CD4-positive, alpha-beta T cell (primary cell): ENCODE measurements at regions of chr18 and their contacts with region 1.

Region 1: DNA sequence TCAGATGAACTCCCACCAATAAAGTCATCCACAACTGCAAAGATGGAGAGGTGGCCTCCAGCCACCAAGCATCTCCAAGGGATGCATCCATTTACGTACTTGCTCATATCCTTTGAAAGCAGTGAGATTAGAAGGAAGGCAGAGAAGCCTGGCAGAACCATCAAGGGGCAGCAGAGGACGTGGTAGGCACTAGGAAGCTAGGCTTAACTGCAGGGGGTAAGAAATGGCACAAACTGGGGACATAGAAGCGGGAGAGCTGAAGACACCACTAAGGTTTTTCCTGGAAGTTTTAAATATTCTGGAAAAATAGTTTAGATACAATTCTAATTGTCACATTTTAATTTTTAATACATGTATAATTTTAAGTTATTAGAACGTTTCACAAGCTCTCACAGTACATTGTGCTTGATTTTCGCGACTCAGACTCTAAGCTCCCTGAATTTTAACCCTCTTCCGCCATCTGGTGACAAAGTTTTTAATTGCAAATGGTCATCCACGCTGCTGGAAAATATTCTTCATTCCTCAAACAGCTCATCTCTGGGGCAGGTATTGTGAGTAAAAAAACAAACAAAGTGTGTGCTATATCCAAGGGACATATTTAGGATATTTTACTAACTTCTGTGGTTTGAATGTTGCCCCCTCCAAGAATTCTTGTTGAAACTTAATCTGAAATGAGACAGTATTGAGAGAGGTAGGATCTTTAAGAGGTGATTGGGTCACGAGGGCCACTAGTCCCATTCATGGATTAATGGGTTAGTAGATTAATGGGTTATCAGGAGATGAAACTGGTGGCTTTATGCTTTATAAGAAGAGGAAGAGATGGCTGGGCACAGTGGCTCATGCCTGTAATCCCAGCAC is 1.6 kb upstream of the PSTPIP2 start:
- DNase-seq: peak in 10 of 14 experiments; percentile 32 to 82 (median 47)
- ATAC-seq: peak; percentile 67
- H3K4me3 ChIP-seq: no peak overlapping the region
- H3K4me3 Mint-ChIP-seq: peak overlapping the region; percentile 81
- H3K27ac ChIP-seq: no peak overlapping the region
- H3K27ac Mint-ChIP-seq: no peak overlapping the region
- H3K4me1 ChIP-seq: peaks cover 41% of the 10 kb centered on the region
- H3K4me1 Mint-ChIP-seq: peaks cover 43% of the 10 kb centered on the region
- H3K27me3 ChIP-seq: no peaks in the 10 kb centered on the region
- H3K27me3 Mint-ChIP-seq: no peaks in the 10 kb centered on the region
- CTCF ChIP-seq: peak; percentile 78

Region 2: DNA sequence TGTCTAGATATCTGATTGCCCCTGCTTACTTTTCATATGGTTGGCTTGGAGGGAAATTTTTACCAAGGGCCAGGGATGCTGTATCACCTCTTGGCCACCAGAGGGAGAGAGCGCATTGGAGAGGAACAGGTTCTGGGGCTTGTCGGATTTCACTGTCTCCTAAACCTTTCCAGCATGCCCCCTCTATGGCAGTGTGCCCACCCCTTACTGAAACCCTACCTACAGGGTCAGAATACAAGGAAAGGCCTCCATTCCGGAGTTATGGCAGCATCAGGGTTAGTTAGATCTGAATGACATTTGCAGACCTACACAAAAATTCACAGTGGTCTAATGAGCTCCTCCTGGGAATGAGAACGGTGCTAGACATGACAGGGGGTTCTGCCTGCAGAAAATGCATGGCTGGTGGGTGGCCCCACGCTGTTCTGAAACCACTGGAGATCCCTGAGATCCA is 452.6 kb before region 1 on chr18:
- CTCF ChIA-PET with region 1: no interaction called
- POLR2A ChIA-PET with region 1: no interaction called
- intact Hi-C with region 1: loop called in 1 of 2 experiments (anchors 5 kb)
- DNase-seq: peak in 13 of 14 experiments; percentile 2 to 67 (median 23)
- ATAC-seq: peak; percentile 55
- H3K4me3 ChIP-seq: no peak overlapping the region
- H3K4me3 Mint-ChIP-seq: no peak overlapping the region
- H3K27ac ChIP-seq: no peak overlapping the region
- H3K27ac Mint-ChIP-seq: no peak overlapping the region
- H3K4me1 ChIP-seq: no peaks in the 10 kb centered on the region
- H3K4me1 Mint-ChIP-seq: no peaks in the 10 kb centered on the region
- H3K27me3 ChIP-seq: peaks cover 0 to 2% of the 10 kb centered on the region in 2 experiments
- H3K27me3 Mint-ChIP-seq: no peaks in the 10 kb centered on the region
- CTCF ChIP-seq: peak; percentile 90

Region 3: DNA sequence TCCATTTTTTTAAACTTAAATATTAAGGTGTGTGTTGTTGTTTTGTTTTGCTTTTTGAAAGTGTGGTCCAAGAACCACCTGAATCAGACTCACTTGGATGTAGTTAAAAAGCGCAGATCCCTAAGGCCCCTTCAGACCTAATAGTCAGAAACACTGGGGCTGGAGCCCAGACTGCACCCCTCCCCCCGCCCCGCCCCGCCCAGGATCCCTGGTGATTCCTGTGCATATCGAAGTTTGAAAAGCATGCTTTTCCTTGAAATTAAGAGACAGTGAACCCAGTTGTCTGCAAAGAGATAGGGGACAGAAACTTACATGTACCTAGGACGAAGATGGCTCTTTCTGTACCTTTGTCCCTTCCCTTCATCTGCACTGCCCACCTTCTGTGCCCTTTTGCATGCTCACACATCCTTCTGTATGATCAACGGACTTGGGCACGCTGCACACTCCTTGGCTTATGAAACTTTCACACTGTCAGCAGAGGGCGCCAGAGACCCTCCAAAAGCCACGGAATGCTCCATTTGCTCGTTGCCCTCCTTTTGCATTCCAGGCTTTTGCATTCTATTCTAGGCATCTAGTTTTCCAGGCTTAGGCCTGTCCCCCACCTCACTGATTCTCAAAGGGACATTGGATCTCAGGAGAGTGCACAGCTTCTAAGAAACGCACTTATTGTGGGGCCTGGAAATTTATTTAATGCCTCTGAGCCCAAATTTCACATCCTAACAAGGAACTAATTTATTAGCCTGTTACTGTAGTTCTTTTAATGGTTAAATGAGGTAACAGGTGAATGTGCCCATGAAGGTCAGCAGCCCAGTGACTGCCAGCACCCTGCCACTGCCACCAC is 382.5 kb before region 1 on chr18:
- CTCF ChIA-PET with region 1: no interaction called
- POLR2A ChIA-PET with region 1: interaction called, 4 read pairs
- intact Hi-C with region 1: loop called (anchors 1 to 2 kb)
- DNase-seq: peak; percentile 57 to 89 (median 74)
- ATAC-seq: no peak
- H3K4me3 ChIP-seq: no peak overlapping the region
- H3K4me3 Mint-ChIP-seq: peak overlapping the region; percentile 57
- H3K27ac ChIP-seq: no peak overlapping the region
- H3K27ac Mint-ChIP-seq: no peak overlapping the region
- H3K4me1 ChIP-seq: peaks cover 45% of the 10 kb centered on the region
- H3K4me1 Mint-ChIP-seq: peaks cover 45% of the 10 kb centered on the region
- H3K27me3 ChIP-seq: no peaks in the 10 kb centered on the region
- H3K27me3 Mint-ChIP-seq: peaks cover 10% of the 10 kb centered on the region
- CTCF ChIP-seq: peak; percentile 86

Region 4: DNA sequence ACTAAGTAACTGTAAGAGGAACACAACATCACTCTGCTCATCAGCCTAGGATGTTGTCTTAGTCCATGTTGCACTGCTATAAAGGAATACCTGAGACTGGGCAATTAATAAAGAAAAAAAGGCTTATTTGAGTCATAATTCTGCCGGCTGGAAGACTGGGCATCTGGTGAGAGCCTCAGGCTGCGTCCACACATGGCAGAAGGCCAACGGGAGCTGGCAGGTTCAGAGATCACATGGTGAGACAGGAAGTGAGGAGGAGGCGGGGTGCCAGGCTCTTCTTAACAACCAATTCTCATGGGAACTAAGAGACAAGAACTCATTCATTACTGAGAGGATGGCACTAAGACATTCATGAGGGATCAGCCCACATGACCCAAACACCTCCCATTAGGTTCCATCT is 153.3 kb before region 1 on chr18:
- CTCF ChIA-PET with region 1: interaction called, 7 read pairs
- POLR2A ChIA-PET with region 1: interaction called, 6 read pairs
- intact Hi-C with region 1: loop called in 1 of 2 experiments (anchors 5 kb)
- DNase-seq: peak in 4 of 14 experiments; percentile 8 to 25 (median 17)
- ATAC-seq: no peak
- H3K4me3 ChIP-seq: no peak overlapping the region
- H3K4me3 Mint-ChIP-seq: no peak overlapping the region
- H3K27ac ChIP-seq: no peak overlapping the region
- H3K27ac Mint-ChIP-seq: no peak overlapping the region
- H3K4me1 ChIP-seq: peaks cover 7% of the 10 kb centered on the region
- H3K4me1 Mint-ChIP-seq: peaks cover 18% of the 10 kb centered on the region
- H3K27me3 ChIP-seq: no peaks in the 10 kb centered on the region
- H3K27me3 Mint-ChIP-seq: no peaks in the 10 kb centered on the region
- CTCF ChIP-seq: no peak

Region 5: DNA sequence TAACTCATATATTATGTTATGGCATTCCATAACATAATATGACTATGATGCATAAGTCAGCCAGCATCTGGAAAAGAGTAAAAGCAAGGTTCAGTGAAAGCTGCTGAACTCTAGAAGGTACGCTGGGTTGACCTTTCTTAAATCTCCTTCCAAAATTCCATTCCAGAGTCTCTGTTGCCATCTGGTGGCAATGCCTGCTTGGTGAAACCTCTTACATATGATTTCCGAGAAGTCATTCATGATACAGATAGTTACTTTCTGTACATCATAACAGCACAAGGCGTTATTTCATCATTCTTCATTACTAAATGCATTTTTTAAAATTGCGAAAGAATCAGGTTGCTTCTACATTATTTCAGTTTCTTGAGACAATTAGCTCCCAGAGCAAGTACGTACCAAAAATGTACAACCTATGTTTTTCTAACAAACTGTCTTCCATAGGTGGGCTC is 99.6 kb before region 1 on chr18:
- CTCF ChIA-PET with region 1: interaction called, 19 read pairs
- POLR2A ChIA-PET with region 1: interaction called, 10 read pairs
- intact Hi-C with region 1: loop called in 1 of 2 experiments (anchors 2 kb)
- DNase-seq: peak; percentile 40 to 86 (median 58)
- ATAC-seq: peak; percentile 86
- H3K4me3 ChIP-seq: no peak overlapping the region
- H3K4me3 Mint-ChIP-seq: no peak overlapping the region
- H3K27ac ChIP-seq: no peak overlapping the region
- H3K27ac Mint-ChIP-seq: peak overlapping the region; percentile 28
- H3K4me1 ChIP-seq: no peaks in the 10 kb centered on the region
- H3K4me1 Mint-ChIP-seq: peaks cover 6% of the 10 kb centered on the region
- H3K27me3 ChIP-seq: no peaks in the 10 kb centered on the region
- H3K27me3 Mint-ChIP-seq: no peaks in the 10 kb centered on the region
- CTCF ChIP-seq: peak; percentile 77

Region 6: GRCh38 chr18:46028536-46028891 is 45.2 kb before region 1 on chr18:
- CTCF ChIA-PET with region 1: interaction called, 3 read pairs
- POLR2A ChIA-PET with region 1: no interaction called
- intact Hi-C with region 1: loop called in 1 of 2 experiments (anchors 2 kb)
- DNase-seq: no peak
- ATAC-seq: no peak
- H3K4me3 ChIP-seq: peak overlapping the region; percentile 78
- H3K4me3 Mint-ChIP-seq: peak overlapping the region; percentile 94
- H3K27ac ChIP-seq: no peak overlapping the region
- H3K27ac Mint-ChIP-seq: peak overlapping the region; percentile 67
- H3K4me1 ChIP-seq: peaks cover 11% of the 10 kb centered on the region
- H3K4me1 Mint-ChIP-seq: peaks cover 10% of the 10 kb centered on the region
- H3K27me3 ChIP-seq: no peaks in the 10 kb centered on the region
- H3K27me3 Mint-ChIP-seq: peaks cover 6% of the 10 kb centered on the region
- CTCF ChIP-seq: no peak